B cell (primary cell): ENCODE measurements at regions of chr14 and their contacts with region 1.

Region 1: DNA sequence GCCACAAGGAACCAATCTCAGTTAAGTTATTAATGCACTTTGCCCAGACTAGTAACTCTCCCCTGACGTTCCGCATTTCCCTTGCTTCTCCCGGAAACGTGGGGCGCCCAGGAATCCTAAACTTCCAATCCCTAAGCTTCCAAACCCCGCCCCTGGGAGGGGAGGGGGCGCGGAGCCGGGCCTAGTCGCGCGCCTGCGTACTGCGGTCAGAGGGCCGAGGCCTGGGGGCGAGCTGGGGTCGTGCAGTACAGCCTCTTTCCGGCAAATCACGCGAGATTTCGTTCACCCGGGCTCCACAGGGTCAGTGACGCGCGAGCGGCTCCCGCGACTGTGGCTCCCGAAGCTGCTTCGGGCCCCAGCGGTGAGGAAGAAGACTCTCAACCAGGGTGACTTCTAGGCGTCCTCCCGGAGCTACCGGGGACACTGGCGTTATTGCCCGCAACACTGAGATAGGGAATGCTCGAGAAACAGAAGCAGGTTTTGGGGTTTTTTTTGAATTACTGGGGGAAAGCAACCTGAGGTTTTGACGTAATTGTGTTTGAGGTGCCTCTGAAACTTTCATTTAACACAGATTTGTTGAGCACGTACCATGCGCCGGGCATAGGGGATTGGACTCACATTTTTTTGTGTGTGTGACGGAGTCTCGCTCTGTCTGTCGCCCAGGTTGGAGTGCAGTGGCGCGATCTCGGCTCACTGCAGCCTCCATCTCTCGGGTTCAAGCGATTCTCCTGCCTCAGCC is at the start of gene PTGR2:
- DNase-seq: peak; percentile 96
- ATAC-seq: peak; percentile 96
- H3K4me3 ChIP-seq: peak within 1 kb of the TSS; percentile 51 to 90 (median 77)
- H3K4me3 Mint-ChIP-seq: peak within 1 kb of the TSS; percentile 95
- H3K27ac ChIP-seq: peak within 1 kb of the TSS; percentile 67 to 88
- H3K27ac Mint-ChIP-seq: peak within 1 kb of the TSS; percentile 96
- H3K4me1 ChIP-seq: peaks cover 10 to 18% of the 10 kb centered on the region in 2 donors
- H3K4me1 Mint-ChIP-seq: peaks cover 17% of the 10 kb centered on the region
- H3K27me3 ChIP-seq: no peaks in the 10 kb centered on the region
- H3K27me3 Mint-ChIP-seq: no peaks in the 10 kb centered on the region
- CTCF ChIP-seq: no peak
- total RNA-seq, gene PTGR2: 4.2 and 4.5 TPM in 2 replicates

Region 2: GRCh38 chr14:73644531-73645247 is 207.1 kb before region 1 on chr14 and contains the start of gene DNAL1:
- CTCF ChIA-PET with region 1: no interaction called
- POLR2A ChIA-PET with region 1: no interaction called
- intact Hi-C with region 1: loop called (anchors 10 kb)
- DNase-seq: peak; percentile 93
- ATAC-seq: peak; percentile 99
- H3K4me3 ChIP-seq: peak within 1 kb of the TSS; percentile 72 to 85 (median 77)
- H3K4me3 Mint-ChIP-seq: peak within 1 kb of the TSS; percentile 94
- H3K27ac ChIP-seq: peak within 1 kb of the TSS; percentile 45 to 91
- H3K27ac Mint-ChIP-seq: peak within 1 kb of the TSS; percentile 81
- H3K4me1 ChIP-seq: peaks cover 9 to 19% of the 10 kb centered on the region in 2 donors
- H3K4me1 Mint-ChIP-seq: peaks cover 17% of the 10 kb centered on the region
- H3K27me3 ChIP-seq: no peaks in the 10 kb centered on the region
- H3K27me3 Mint-ChIP-seq: no peaks in the 10 kb centered on the region
- CTCF ChIP-seq: no peak
- total RNA-seq, gene DNAL1: 6.3 and 10.7 TPM in 2 replicates

Region 3: GRCh38 chr14:73713803-73714655 is 137.8 kb before region 1 on chr14 and contains the start of gene PNMA1:
- CTCF ChIA-PET with region 1: no interaction called
- POLR2A ChIA-PET with region 1: no interaction called
- intact Hi-C with region 1: loop called (anchors 1 kb)
- DNase-seq: peak; percentile 92
- ATAC-seq: peak; percentile 81
- H3K4me3 ChIP-seq: peak within 1 kb of the TSS; percentile 54 to 85 (median 77)
- H3K4me3 Mint-ChIP-seq: peak within 1 kb of the TSS; percentile 92
- H3K27ac ChIP-seq: peak within 1 kb of the TSS; percentile 39 to 81
- H3K27ac Mint-ChIP-seq: peak within 1 kb of the TSS; percentile 98
- H3K4me1 ChIP-seq: peaks cover 17 to 22% of the 10 kb centered on the region in 2 donors
- H3K4me1 Mint-ChIP-seq: peaks cover 21% of the 10 kb centered on the region
- H3K27me3 ChIP-seq: no peaks in the 10 kb centered on the region
- H3K27me3 Mint-ChIP-seq: no peaks in the 10 kb centered on the region
- CTCF ChIP-seq: no peak
- total RNA-seq, gene PNMA1: 29.6 and 31.6 TPM in 2 replicates

Region 4: DNA sequence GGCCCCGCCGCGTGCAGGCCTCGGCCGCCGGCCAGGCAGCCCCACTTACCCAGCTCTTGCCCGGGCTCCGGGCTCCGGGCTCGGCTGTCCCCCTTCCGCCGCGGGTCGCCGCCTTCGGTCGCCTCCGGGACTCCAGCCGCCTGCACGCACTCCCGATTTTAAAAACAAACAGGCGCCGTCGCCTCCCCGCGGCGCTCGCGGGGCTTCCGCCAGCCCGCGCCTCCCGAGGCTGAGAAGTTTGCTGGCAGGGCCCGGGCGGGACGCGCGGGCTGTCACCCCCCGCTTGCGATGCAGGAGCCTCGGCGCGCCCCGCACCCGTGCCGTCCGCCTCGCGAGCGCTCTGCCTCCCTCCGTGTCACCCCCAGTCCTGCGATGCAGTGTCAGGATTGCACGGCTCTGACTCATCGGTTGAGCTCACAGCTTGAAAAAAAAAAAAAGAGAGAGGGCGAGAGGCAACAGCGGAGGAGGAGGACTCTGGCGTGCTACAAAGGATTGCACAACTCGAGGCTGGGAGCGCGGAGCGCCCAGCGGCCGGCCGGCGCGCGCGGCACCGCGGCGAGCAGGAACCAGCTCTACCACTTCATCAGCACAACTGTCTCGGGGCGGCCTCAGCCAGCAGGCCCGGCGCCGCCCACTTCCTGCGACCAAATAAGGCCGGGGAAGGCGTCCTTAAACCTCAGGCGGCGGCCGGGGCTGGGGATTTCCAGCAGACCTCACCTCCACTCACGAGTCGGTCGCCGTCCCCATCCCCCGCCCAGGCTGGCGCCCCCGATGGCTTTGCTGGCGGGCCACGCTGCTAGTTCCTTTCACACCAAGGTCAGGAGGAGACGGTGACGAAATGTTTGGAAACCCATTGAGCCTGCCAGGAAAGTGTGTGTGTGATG is 91.9 kb before region 1 on chr14:
- CTCF ChIA-PET with region 1: interaction called, 4 read pairs
- POLR2A ChIA-PET with region 1: interaction called, 3 read pairs
- intact Hi-C with region 1: loop called (anchors 1 kb)
- DNase-seq: peak; percentile 98
- ATAC-seq: peak; percentile 67
- H3K4me3 ChIP-seq: peak overlapping the region; percentile 32 to 90 (median 87)
- H3K4me3 Mint-ChIP-seq: peak overlapping the region; percentile 92
- H3K27ac ChIP-seq: peak overlapping the region; percentile 98
- H3K27ac Mint-ChIP-seq: peak overlapping the region; percentile 97
- H3K4me1 ChIP-seq: peaks cover 79 to 85% of the 10 kb centered on the region in 2 donors
- H3K4me1 Mint-ChIP-seq: peaks cover 84% of the 10 kb centered on the region
- H3K27me3 ChIP-seq: no peaks in the 10 kb centered on the region
- H3K27me3 Mint-ChIP-seq: no peaks in the 10 kb centered on the region
- CTCF ChIP-seq: peak; percentile 21

Region 5: GRCh38 chr14:73771848-73772638 is 79.8 kb before region 1 on chr14:
- CTCF ChIA-PET with region 1: no interaction called
- POLR2A ChIA-PET with region 1: no interaction called
- intact Hi-C with region 1: loop called (anchors 5 kb)
- DNase-seq: peak; percentile 89
- ATAC-seq: peak; percentile 61
- H3K4me3 ChIP-seq: peak overlapping the region in 3 of 5 experiments; percentile 5 to 52 (median 10)
- H3K4me3 Mint-ChIP-seq: peak overlapping the region; percentile 87
- H3K27ac ChIP-seq: peak overlapping the region; percentile 96 to 97
- H3K27ac Mint-ChIP-seq: peak overlapping the region; percentile 99
- H3K4me1 ChIP-seq: peaks cover 83 to 96% of the 10 kb centered on the region in 2 donors
- H3K4me1 Mint-ChIP-seq: peaks cover 76% of the 10 kb centered on the region
- H3K27me3 ChIP-seq: no peaks in the 10 kb centered on the region
- H3K27me3 Mint-ChIP-seq: no peaks in the 10 kb centered on the region
- CTCF ChIP-seq: no peak

Region 6: GRCh38 chr14:73886449-73887317 is 34.9 kb after region 1 on chr14 and contains the start of gene ZNF410:
- CTCF ChIA-PET with region 1: no interaction called
- POLR2A ChIA-PET with region 1: interaction called, 8 read pairs
- intact Hi-C with region 1: loop called (anchors 1 kb)
- DNase-seq: peak; percentile 93
- ATAC-seq: peak; percentile 99
- H3K4me3 ChIP-seq: peak within 1 kb of the TSS; percentile 64 to 97 (median 94)
- H3K4me3 Mint-ChIP-seq: peak within 1 kb of the TSS; percentile 99
- H3K27ac ChIP-seq: peak within 1 kb of the TSS; percentile 94 to 96
- H3K27ac Mint-ChIP-seq: peak within 1 kb of the TSS; percentile 98
- H3K4me1 ChIP-seq: peaks cover 18 to 20% of the 10 kb centered on the region in 2 donors
- H3K4me1 Mint-ChIP-seq: peaks cover 41% of the 10 kb centered on the region
- H3K27me3 ChIP-seq: no peaks in the 10 kb centered on the region
- H3K27me3 Mint-ChIP-seq: no peaks in the 10 kb centered on the region
- CTCF ChIP-seq: no peak
- total RNA-seq, gene ZNF410: 58.3 and 69.0 TPM in 2 replicates

Region 7: DNA sequence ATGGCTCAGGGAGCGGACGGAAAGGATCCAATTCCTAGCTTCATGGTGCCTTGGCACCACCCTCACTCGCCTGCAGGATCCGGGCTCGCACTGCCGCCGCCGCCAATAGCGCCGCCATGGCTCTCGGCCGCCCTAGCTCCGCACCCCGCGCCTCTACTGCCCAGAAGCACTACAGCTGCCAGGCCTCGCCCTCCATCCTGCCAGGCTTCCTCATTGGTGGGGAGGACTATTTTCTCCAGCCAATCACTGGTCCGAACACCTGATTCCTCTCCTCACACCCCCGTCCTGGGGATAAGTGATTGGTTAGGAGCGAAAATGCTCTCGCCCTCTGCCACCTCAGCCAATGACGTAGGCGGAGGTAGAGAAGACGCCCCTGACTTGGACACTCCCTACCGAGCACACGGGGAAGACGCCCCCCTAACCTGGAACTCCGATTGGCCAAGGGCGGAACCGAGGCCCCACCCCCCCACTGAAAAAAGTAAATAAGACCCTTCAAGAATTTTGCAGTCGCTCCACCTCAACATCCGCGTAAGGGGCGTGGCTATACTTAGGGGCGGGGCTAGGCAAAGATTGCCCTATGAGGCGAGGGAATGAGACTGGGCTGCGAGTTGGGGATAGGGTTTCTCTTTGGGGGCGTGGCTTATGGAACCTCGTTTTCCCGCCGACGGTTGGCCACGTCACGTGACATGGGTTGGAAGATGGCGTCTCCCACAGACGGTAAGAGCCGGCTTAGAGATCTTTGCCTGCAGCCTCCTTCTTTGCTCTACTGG is 232.6 kb after region 1 on chr14 and contains the starts of genes ALDH6A1 and LIN52:
- CTCF ChIA-PET with region 1: no interaction called
- POLR2A ChIA-PET with region 1: no interaction called
- intact Hi-C with region 1: loop called (anchors 5 kb)
- DNase-seq: peak; percentile 100
- ATAC-seq: peak; percentile 85
- H3K4me3 ChIP-seq: peak within 1 kb of the TSS; percentile 75 to 79 (median 77)
- H3K4me3 Mint-ChIP-seq: peak within 1 kb of the TSS; percentile 95
- H3K27ac ChIP-seq: peak within 1 kb of the TSS; percentile 34 to 79
- H3K27ac Mint-ChIP-seq: peak within 1 kb of the TSS; percentile 88
- H3K4me1 ChIP-seq: peaks cover 23 to 24% of the 10 kb centered on the region in 2 donors
- H3K4me1 Mint-ChIP-seq: peaks cover 35% of the 10 kb centered on the region
- H3K27me3 ChIP-seq: no peaks in the 10 kb centered on the region
- H3K27me3 Mint-ChIP-seq: no peaks in the 10 kb centered on the region
- CTCF ChIP-seq: no peak
- total RNA-seq, gene ALDH6A1: 14.9 and 16.7 TPM in 2 replicates
- total RNA-seq, gene LIN52: 13.1 and 15.5 TPM in 2 replicates